ENCODE measurements at regions of chr5 and their contacts with region 1.

Region 1: DNA sequence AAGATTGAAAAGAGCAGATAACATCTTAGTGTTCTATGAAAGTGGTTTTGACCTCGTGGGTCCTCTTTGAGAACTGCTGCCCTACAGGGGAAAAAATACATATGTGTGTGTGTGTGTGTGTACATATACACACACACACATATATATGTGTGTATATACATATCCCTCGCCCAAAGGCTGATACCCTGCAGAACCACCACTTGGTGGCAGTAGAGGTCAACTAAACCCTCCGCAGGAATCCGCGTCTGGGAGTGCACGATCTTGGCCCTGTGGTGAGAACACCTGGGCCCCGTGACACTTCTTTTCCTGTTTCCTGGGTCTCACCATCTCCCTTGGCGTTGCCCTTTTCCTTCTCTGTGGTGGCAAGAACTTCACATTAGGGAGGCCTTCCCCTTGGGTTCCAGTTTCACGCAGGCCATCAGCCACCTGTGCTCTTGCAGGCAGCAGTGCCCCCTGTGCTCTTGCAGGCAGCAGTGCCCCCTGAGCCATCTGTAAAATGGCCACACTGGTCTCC is 8.2 kb downstream of the IL9 start:
- DNase-seq: peak; percentile 69
- ATAC-seq: peak; percentile 93
- H3K4me3 ChIP-seq: no peak overlapping the region
- H3K27ac ChIP-seq: no peak overlapping the region
- H3K4me1 ChIP-seq: peaks cover 9% of the 10 kb centered on the region; the same call in 1 of the 2 replicates
- H3K27me3 ChIP-seq: peaks cover 20% of the 10 kb centered on the region
- CTCF ChIP-seq: peak; percentile 91
- POLR2A ChIP-seq: peak; percentile 39; the same call in 1 of the 2 replicates
- RAD21 ChIP-seq: peak; percentile 95

Region 2: GRCh38 chr5:135246923-135247795 is 640.2 kb before region 1 on chr5:
- CTCF ChIA-PET with region 1: no interaction called
- POLR2A ChIA-PET with region 1: no interaction called
- dilution Hi-C with region 1: no loop called
- in situ Hi-C with region 1: no loop called
- intact Hi-C with region 1: no loop called
- DNase-seq: peak; percentile 98
- ATAC-seq: peak; percentile 70
- H3K4me3 ChIP-seq: no peak overlapping the region
- H3K27ac ChIP-seq: peak overlapping the region; percentile 86
- H3K4me1 ChIP-seq: peaks cover 49% of the 10 kb centered on the region
- H3K27me3 ChIP-seq: no peaks in the 10 kb centered on the region
- CTCF ChIP-seq: no peak
- POLR2A ChIP-seq: no peak
- RAD21 ChIP-seq: peak; percentile 14

Region 3: DNA sequence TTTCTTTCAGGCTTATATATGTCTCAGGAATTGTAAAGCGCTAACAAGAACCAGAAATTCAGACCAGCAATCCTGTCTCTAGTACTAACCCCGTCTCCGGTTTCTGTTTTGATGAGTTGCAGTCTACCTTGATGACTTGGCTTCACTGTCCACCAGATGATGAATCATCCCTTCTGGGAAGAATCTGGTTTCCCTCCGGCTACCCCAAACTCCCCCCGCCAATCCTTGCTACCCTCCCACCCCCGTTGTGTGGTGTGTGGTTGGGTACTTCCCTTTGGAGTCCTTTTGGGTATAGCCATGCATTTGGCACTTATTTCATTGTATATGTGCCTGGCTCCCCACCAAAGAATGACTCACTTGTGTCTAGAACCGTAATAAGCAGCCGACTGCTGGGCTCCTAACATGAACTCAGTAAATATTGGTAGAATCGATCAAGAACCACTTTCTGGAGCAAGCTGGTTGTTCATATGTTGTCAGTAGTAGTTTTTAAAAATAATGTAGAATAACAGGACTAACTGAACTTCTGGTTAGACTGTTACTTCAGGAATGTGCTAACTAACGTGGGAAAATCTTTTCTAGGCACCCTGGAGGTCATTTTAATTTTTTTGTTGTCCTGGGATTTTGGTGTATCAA is 133.1 kb after region 1 on chr5:
- CTCF ChIA-PET with region 1: no interaction called
- POLR2A ChIA-PET with region 1: no interaction called
- dilution Hi-C with region 1: no loop called
- in situ Hi-C with region 1: no loop called
- intact Hi-C with region 1: loop called (anchors 5 kb)
- DNase-seq: peak; percentile 99
- ATAC-seq: peak; percentile 66
- H3K4me3 ChIP-seq: no peak overlapping the region
- H3K27ac ChIP-seq: peak overlapping the region; percentile 97; the same call in 1 of the 2 replicates
- H3K4me1 ChIP-seq: peaks cover 51% of the 10 kb centered on the region
- H3K27me3 ChIP-seq: no peaks in the 10 kb centered on the region
- CTCF ChIP-seq: no peak
- POLR2A ChIP-seq: 0 out of 2 replicates have a peak, but pooled peaks have one; percentile 58
- RAD21 ChIP-seq: no peak

Region 4: GRCh38 chr5:136062366-136063274 is 175.2 kb after region 1 on chr5:
- CTCF ChIA-PET with region 1: interaction called, 3 read pairs
- POLR2A ChIA-PET with region 1: no interaction called
- dilution Hi-C with region 1: no loop called
- in situ Hi-C with region 1: no loop called
- intact Hi-C with region 1: loop called (anchors 1 kb)
- DNase-seq: peak; percentile 45
- ATAC-seq: no peak
- H3K4me3 ChIP-seq: no peak overlapping the region
- H3K27ac ChIP-seq: peak overlapping the region; percentile 18; the same call in 1 of the 2 replicates
- H3K4me1 ChIP-seq: peaks cover 18% of the 10 kb centered on the region
- H3K27me3 ChIP-seq: no peaks in the 10 kb centered on the region
- CTCF ChIP-seq: peak; percentile 54
- POLR2A ChIP-seq: no peak
- RAD21 ChIP-seq: peak; percentile 74

Region 5: GRCh38 chr5:136174021-136174659 is 286.7 kb after region 1 on chr5:
- CTCF ChIA-PET with region 1: interaction called, 3 read pairs
- POLR2A ChIA-PET with region 1: no interaction called
- dilution Hi-C with region 1: no loop called
- in situ Hi-C with region 1: no loop called
- intact Hi-C with region 1: loop called (anchors 5 kb)
- DNase-seq: peak; percentile 75
- ATAC-seq: peak; percentile 92
- H3K4me3 ChIP-seq: no peak overlapping the region
- H3K27ac ChIP-seq: no peak overlapping the region
- H3K4me1 ChIP-seq: no peaks in the 10 kb centered on the region
- H3K27me3 ChIP-seq: no peaks in the 10 kb centered on the region
- CTCF ChIP-seq: peak; percentile 72
- POLR2A ChIP-seq: no peak
- RAD21 ChIP-seq: peak; percentile 67

Region 6: GRCh38 chr5:136212252-136212721 is 324.9 kb after region 1 on chr5:
- CTCF ChIA-PET with region 1: interaction called, 4 read pairs
- POLR2A ChIA-PET with region 1: no interaction called
- dilution Hi-C with region 1: no loop called
- in situ Hi-C with region 1: loop called (anchors 5 kb)
- intact Hi-C with region 1: loop called (anchors 1 kb)
- DNase-seq: peak; percentile 48
- ATAC-seq: peak; percentile 74
- H3K4me3 ChIP-seq: no peak overlapping the region
- H3K27ac ChIP-seq: no peak overlapping the region
- H3K4me1 ChIP-seq: no peaks in the 10 kb centered on the region
- H3K27me3 ChIP-seq: peaks cover 32% of the 10 kb centered on the region
- CTCF ChIP-seq: peak; percentile 76
- POLR2A ChIP-seq: no peak
- RAD21 ChIP-seq: peak; percentile 76

Region 7: GRCh38 chr5:136424835-136425584 is 537.6 kb after region 1 on chr5:
- CTCF ChIA-PET with region 1: no interaction called
- POLR2A ChIA-PET with region 1: no interaction called
- dilution Hi-C with region 1: no loop called
- in situ Hi-C with region 1: no loop called
- intact Hi-C with region 1: loop called (anchors 10 kb)
- DNase-seq: peak; percentile 33
- ATAC-seq: peak; percentile 61; the same call in 1 of the 2 replicates
- H3K4me3 ChIP-seq: no peak overlapping the region
- H3K27ac ChIP-seq: no peak overlapping the region
- H3K4me1 ChIP-seq: no peaks in the 10 kb centered on the region
- H3K27me3 ChIP-seq: no peaks in the 10 kb centered on the region
- CTCF ChIP-seq: peak; percentile 61
- POLR2A ChIP-seq: no peak
- RAD21 ChIP-seq: peak; percentile 58

Measured in IMR-90 (cell line).